GM18951 (cell line): ENCODE measurements at regions of chr5 and their contacts with region 1.

Region 1: GRCh38 chr5:88883059-88883835 is at the start of gene MEF2C:
- POLR2A ChIP-seq: peak; percentile 87

Region 2: GRCh38 chr5:88979244-88979643 is 96.0 kb after region 1 on chr5:
- in situ Hi-C with region 1: no loop called
- POLR2A ChIP-seq: no peak

Region 3: DNA sequence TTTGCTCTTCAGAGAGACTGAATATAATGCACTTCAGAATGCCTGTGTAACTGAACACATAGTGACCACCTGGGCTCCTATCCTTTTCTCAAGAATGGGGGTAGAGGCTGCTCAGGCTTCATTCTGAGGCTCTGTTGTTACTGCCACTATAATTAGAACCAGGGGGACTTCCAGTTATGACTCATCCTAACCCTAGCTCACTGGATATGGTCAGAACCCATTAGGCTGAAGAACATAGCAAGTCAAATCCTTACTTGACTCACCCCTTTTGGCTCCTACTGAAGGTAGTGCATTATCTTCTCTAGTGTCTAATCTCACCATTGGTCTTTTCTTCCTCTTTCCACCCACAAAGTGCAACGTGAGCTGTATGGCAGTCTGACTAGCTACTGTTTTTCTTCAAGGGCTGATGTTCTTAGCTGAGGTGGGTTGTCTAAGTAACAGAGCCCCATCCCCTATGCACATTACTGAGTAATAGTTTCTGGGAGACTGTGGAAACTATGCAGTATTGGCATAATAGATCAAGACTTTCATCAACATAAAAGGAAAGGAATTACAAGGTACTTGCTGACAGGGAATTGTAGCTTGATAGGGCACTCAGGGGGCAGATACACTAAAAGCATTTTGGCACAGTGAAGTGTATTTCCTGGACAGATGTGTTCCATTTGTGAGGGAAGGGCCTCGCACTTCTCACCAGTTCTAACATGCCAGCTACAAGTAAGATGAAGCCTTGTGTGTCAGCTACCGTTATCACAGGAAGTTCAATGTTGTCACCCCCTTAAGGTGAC is 430.7 kb after region 1 on chr5:
- in situ Hi-C with region 1: loop called (anchors 25 kb)
- POLR2A ChIP-seq: peak; percentile 45